HCT116 (cell line): ENCODE measurements at regions of chr17 and their contacts with region 1.

Region 1: GRCh38 chr17:81601525-81602120 is 35.3 kb downstream of the NPLOC4 start:
- DNase-seq: peak; percentile 49
- ATAC-seq: peak; percentile 96
- H3K4me3 ChIP-seq: no peak overlapping the region
- H3K27ac ChIP-seq: no peak overlapping the region
- H3K4me1 ChIP-seq: peaks cover 0 to 6% of the 10 kb centered on the region in 2 experiments; a peak in 2 of 4 replicates
- H3K27me3 ChIP-seq: no peaks in the 10 kb centered on the region
- CTCF ChIP-seq: peak; percentile 75 to 96 (median 92)
- POLR2A ChIP-seq: no peak
- RAD21 ChIP-seq: peak; percentile 91

Region 2: GRCh38 chr17:81253358-81254131 is 348.1 kb before region 1 on chr17:
- CTCF ChIA-PET with region 1: no interaction called
- POLR2A ChIA-PET with region 1: no interaction called
- RAD21 ChIA-PET with region 1: no interaction called
- intact Hi-C with region 1: loop called (anchors 1 kb)
- DNase-seq: no peak
- ATAC-seq: peak; percentile 66
- H3K4me3 ChIP-seq: no peak overlapping the region
- H3K27ac ChIP-seq: no peak overlapping the region
- H3K4me1 ChIP-seq: no peaks in the 10 kb centered on the region
- H3K27me3 ChIP-seq: no peaks in the 10 kb centered on the region
- CTCF ChIP-seq: peak; percentile 69 to 95 (median 74)
- POLR2A ChIP-seq: no peak
- RAD21 ChIP-seq: peak; percentile 93

Region 3: GRCh38 chr17:81328978-81329919 is 272.4 kb before region 1 on chr17:
- CTCF ChIA-PET with region 1: no interaction called
- POLR2A ChIA-PET with region 1: no interaction called
- RAD21 ChIA-PET with region 1: no interaction called
- intact Hi-C with region 1: no loop called
- DNase-seq: peak; percentile 91
- ATAC-seq: peak; percentile 86
- H3K4me3 ChIP-seq: peak overlapping the region; percentile 48 to 55
- H3K27ac ChIP-seq: peak overlapping the region; percentile 88
- H3K4me1 ChIP-seq: peaks cover 45 to 53% of the 10 kb centered on the region in 2 experiments
- H3K27me3 ChIP-seq: no peaks in the 10 kb centered on the region
- CTCF ChIP-seq: no peak
- POLR2A ChIP-seq: peak; percentile 71
- RAD21 ChIP-seq: no peak

Region 4: DNA sequence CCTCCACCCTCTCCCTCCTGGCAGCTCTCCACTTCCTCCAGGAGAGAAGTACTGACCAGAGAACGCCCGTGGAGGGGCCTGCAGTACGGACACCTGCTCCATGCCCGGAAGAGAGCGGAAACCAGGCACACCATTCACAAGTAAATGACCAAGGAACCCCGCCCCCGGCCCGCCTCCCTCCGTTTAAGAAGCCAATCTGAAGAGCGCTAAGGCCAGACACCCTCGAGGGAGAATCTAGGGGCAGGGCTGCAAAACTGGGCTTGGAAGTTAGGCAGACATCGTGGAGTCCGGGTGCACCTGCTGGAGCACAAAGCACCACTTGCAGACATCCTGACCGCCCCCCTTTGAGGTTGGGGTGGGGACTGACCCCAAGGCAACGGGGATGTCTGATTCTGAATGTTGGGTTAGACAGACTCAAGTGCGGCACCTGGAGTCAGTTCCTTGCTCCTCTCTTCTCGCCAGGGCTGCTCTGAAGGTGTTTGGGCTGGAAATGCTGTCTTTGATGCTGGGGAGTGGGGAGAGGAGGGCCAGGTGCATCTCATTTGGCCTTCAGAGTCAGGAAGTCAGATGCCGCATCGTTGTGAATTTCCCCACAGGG is 48.5 kb before region 1 on chr17:
- CTCF ChIA-PET with region 1: interaction called, 3 read pairs
- POLR2A ChIA-PET with region 1: no interaction called
- RAD21 ChIA-PET with region 1: no interaction called
- intact Hi-C with region 1: loop called (anchors 5 kb)
- DNase-seq: peak; percentile 80
- ATAC-seq: peak; percentile 80
- H3K4me3 ChIP-seq: peak overlapping the region; percentile 94 to 96
- H3K27ac ChIP-seq: peak overlapping the region; percentile 86
- H3K4me1 ChIP-seq: peaks cover 17 to 46% of the 10 kb centered on the region in 2 experiments
- H3K27me3 ChIP-seq: no peaks in the 10 kb centered on the region
- CTCF ChIP-seq: peak in 2 of 3 experiments; percentile 21 to 44; a peak in 3 of 6 replicates
- POLR2A ChIP-seq: peak; percentile 48
- RAD21 ChIP-seq: no peak

Region 5: DNA sequence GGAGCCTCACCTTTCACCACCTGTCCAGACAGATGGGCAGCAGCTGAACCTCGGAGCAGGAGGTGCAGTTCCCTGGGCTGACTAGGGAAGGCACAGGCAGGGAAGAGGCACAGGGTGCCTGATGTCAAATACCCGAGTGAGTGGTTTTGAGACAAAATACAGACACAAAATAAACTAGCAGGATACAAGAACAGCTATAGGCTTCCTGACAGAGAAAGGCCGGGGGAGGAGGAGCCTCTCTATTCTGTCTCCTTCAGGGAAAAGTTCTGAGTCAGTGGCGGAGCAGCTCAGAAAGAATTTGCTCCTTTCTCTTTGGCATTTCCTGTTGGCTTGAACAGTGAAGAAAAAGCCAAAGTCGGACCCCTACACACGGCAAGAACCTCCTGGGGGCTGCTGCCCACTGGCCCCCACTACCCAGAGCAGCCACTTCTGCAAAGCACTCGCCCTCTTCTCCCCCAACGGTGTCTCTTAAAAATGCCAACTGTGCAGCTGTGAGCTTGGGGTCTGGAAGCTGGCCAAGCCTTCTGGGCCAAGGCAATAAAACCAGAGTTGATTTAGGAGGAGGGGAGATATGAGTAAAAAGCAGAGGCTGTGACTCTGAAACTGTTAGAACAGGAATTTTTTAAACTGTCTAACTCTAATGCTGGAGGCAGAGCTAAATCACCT is 35.0 kb before region 1 on chr17:
- CTCF ChIA-PET with region 1: interaction called, 3 read pairs
- POLR2A ChIA-PET with region 1: no interaction called
- RAD21 ChIA-PET with region 1: no interaction called
- intact Hi-C with region 1: loop called (anchors 5 kb)
- DNase-seq: peak; percentile 41
- ATAC-seq: peak; percentile 79
- H3K4me3 ChIP-seq: peak overlapping the region in 1 of 2 experiments; percentile 23; a peak in 2 of 4 replicates
- H3K27ac ChIP-seq: peak overlapping the region; percentile 61
- H3K4me1 ChIP-seq: peaks cover 18 to 24% of the 10 kb centered on the region in 2 experiments
- H3K27me3 ChIP-seq: no peaks in the 10 kb centered on the region
- CTCF ChIP-seq: no peak
- POLR2A ChIP-seq: no peak
- RAD21 ChIP-seq: no peak